Pancreas (tissue), 10 donors: ENCODE measurements at regions of chr7 and their contacts with region 1.

Region 1: GRCh38 chr7:157061979-157062378 is 51.5 kb upstream of the MNX1 start:
- DNase-seq: no peak
- ATAC-seq: no peak
- H3K4me3 ChIP-seq: no peak overlapping the region
- H3K27ac ChIP-seq: no peak overlapping the region
- H3K4me1 ChIP-seq: no peaks in the 10 kb centered on the region
- H3K27me3 ChIP-seq: no peaks in the 10 kb centered on the region
- CTCF ChIP-seq: no peak

Region 2: GRCh38 chr7:157125376-157126223 is 63.6 kb after region 1 on chr7:
- intact Hi-C with region 1: loop called in 1 of 3 experiments (anchors 10 kb)
- DNase-seq: no peak
- ATAC-seq: no peak
- H3K4me3 ChIP-seq: no peak overlapping the region
- H3K27ac ChIP-seq: no peak overlapping the region
- H3K4me1 ChIP-seq: no peaks in the 10 kb centered on the region
- H3K27me3 ChIP-seq: no peaks in the 10 kb centered on the region
- CTCF ChIP-seq: no peak

Region 3: DNA sequence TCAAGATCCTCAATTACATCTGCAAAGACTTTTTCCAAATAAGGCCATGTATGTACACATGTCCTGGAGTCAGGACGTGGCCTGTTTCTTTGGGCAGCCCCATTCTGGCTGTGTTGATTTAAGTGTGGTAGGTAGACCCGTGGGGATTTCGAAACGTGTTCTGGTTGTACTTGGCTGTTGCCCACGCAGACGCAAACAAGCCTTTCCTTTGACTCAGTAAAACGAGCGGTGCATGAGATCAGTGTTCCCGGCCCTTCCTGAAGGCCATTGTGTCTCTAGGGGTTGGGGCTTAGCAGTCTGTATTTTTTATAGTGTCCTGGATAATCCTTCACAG is 210.0 kb after region 1 on chr7:
- intact Hi-C with region 1: no loop called
- DNase-seq: peak in 5 of 6 donors; percentile 65 to 85 (median 79)
- ATAC-seq: peak; percentile 85 to 92 (median 90)
- H3K4me3 ChIP-seq: no peak overlapping the region
- H3K27ac ChIP-seq: peak overlapping the region in 3 of 4 donors; percentile 19 to 79 (median 72)
- H3K4me1 ChIP-seq: peaks cover 3 to 13% (median 5%) of the 10 kb centered on the region in 3 donors
- H3K27me3 ChIP-seq: no peaks in the 10 kb centered on the region
- CTCF ChIP-seq: no peak